Kidney (tissue), 22 donors: ENCODE measurements at regions of chr22 and their contacts with region 1.

Region 1: DNA sequence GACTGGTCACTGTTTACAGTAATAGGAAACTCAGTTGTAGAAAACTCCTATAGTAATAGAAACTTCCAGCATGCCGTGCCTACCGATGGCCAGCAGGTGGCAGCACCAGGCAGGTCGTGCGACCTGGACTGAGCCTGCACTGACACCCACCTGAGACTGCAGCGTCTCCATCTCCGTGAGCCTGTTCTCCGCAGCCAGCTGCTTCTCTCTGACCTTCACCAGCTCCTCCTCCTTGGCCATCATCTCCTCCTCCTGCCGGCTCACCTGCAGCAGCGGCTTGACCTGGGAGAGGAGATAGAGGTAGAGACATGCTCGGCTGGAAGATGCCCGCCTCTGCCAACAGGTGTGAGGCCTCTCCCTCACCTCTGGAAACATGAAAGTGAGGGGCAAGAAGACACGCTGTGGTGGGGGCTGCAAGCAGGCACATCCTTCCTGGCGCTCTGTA is 48.5 kb downstream of the APOL1 start:
- DNase-seq: peak; percentile 83 to 88 (median 86)
- H3K4me3 ChIP-seq: no peak overlapping the region
- H3K27ac ChIP-seq: no peak overlapping the region
- H3K4me1 ChIP-seq: no peaks in the 10 kb centered on the region
- H3K27me3 ChIP-seq: no peaks in the 10 kb centered on the region
- CTCF ChIP-seq: peak; percentile 94

Region 2: GRCh38 chr22:36470162-36470993 is 169.0 kb after region 1 on chr22:
- intact Hi-C with region 1: loop called (anchors 10 kb)
- DNase-seq: peak; percentile 89 to 94 (median 91)
- H3K4me3 ChIP-seq: no peak overlapping the region
- H3K27ac ChIP-seq: peak overlapping the region; percentile 66 to 72
- H3K4me1 ChIP-seq: peaks cover 0 to 18% (median 4%) of the 10 kb centered on the region in 3 donors
- H3K27me3 ChIP-seq: no peaks in the 10 kb centered on the region
- CTCF ChIP-seq: peak; percentile 96